ENCODE measurements at regions of chr18 and their contacts with region 1.

Region 1: DNA sequence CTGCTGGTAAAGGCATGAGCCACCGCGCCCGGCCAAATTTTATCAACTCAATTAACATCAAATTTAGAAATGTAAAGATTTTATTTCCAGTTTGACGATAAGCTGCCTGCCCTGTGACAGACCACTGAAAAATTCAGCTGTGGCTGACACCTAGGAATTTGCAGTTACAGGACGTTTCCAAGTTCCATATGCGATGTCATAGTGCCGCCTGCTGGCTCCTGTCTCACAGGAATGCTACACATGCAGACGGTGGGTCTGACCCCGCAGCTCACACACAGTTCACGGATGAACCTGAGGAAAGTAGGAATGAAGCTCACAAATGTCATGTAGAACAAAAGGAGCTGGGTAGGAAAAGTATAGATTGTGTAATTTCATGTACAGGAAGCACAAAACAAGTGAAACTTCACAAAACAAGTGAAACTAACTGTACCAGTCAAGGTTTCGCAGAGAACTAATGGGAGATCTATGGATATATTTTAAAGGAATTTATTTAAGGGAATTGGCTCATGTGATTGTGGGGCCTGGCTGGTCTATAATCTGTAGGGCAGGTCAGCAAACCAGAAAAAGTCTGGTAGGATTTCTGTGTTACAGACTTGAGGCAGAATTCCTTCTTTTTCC is 13.2 kb upstream of the SEH1L start:
- DNase-seq: peak; percentile 82
- ATAC-seq: peak; percentile 94
- H3K4me3 ChIP-seq: no peak overlapping the region; a peak in 1 of 6 replicates
- H3K27ac ChIP-seq: no peak overlapping the region
- H3K4me1 ChIP-seq: peaks cover 57% of the 10 kb centered on the region
- H3K27me3 ChIP-seq: no peaks in the 10 kb centered on the region
- CTCF ChIP-seq: peak; percentile 97
- EP300 ChIP-seq: no peak
- POLR2A ChIP-seq: no peak
- RAD21 ChIP-seq: peak; percentile 94

Region 2: DNA sequence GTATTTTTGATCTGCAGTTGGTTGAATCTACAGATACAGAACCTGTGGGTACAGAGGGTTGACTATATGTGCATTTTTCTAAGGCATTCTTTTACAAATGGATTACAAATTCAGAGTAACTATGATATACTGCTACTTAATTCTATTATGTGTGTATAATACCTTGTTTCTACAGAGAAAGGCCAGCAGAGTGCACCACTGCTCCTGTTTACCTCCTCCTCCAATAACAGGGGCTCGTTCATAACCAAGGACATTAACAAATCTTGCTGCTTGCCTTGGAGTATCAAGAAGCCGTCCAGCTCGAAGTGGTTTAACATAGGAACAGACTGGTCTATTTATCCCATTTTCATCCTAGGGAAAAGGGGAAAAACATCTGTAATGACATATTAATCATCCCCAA is 248.5 kb before region 1 on chr18:
- CTCF ChIA-PET with region 1: interaction called, 6 read pairs
- POLR2A ChIA-PET with region 1: interaction called, 3 read pairs
- in situ Hi-C with region 1: no loop called
- intact Hi-C with region 1: loop called (anchors 2 kb)
- DNase-seq: peak; percentile 24
- ATAC-seq: peak; percentile 57
- H3K4me3 ChIP-seq: no peak overlapping the region
- H3K27ac ChIP-seq: no peak overlapping the region
- H3K4me1 ChIP-seq: 0 out of 2 replicates have a peak, but pooled peaks cover 5% of the 10 kb centered on the region
- H3K27me3 ChIP-seq: no peaks in the 10 kb centered on the region
- CTCF ChIP-seq: peak; percentile 25
- EP300 ChIP-seq: no peak
- POLR2A ChIP-seq: no peak
- RAD21 ChIP-seq: no peak

Region 3: DNA sequence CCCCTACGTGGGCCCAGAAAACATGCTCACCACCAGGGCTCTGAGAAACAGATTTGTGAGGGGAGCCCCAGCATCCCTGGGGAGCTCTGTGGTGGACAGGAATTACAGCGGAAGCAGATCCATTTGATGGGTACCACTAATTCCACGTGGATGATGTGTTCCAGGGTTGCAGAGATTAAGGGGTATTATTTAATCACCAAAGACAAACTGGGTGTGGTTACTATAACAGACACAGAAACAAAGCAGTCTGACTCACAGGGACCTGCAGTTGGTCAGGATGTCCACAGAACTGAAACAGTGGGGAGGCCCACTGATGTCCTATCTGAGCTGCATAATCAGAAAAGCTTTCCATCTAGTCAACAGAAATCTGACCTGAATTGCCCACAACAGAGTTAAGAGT is 165.9 kb before region 1 on chr18:
- CTCF ChIA-PET with region 1: interaction called, 5 read pairs
- POLR2A ChIA-PET with region 1: no interaction called
- in situ Hi-C with region 1: no loop called
- intact Hi-C with region 1: loop called (anchors 1 kb)
- DNase-seq: no peak
- ATAC-seq: no peak
- H3K4me3 ChIP-seq: no peak overlapping the region; a peak in 1 of 6 replicates
- H3K27ac ChIP-seq: no peak overlapping the region
- H3K4me1 ChIP-seq: peaks cover 39% of the 10 kb centered on the region
- H3K27me3 ChIP-seq: no peaks in the 10 kb centered on the region
- CTCF ChIP-seq: no peak
- EP300 ChIP-seq: no peak
- POLR2A ChIP-seq: no peak
- RAD21 ChIP-seq: no peak

Region 4: GRCh38 chr18:12890506-12890905 is 44.1 kb before region 1 on chr18:
- CTCF ChIA-PET with region 1: interaction called, 4 read pairs
- POLR2A ChIA-PET with region 1: no interaction called
- in situ Hi-C with region 1: loop called (anchors 5 kb)
- intact Hi-C with region 1: loop called (anchors 1 kb)
- DNase-seq: peak; percentile 45
- ATAC-seq: peak; percentile 90
- H3K4me3 ChIP-seq: no peak overlapping the region
- H3K27ac ChIP-seq: no peak overlapping the region
- H3K4me1 ChIP-seq: peaks cover 16% of the 10 kb centered on the region
- H3K27me3 ChIP-seq: 0 out of 5 replicates have a peak, but pooled peaks cover 0 to 3% of the 10 kb centered on the region in 2 experiments
- CTCF ChIP-seq: peak; percentile 43
- EP300 ChIP-seq: no peak
- POLR2A ChIP-seq: no peak
- RAD21 ChIP-seq: 0 out of 2 replicates have a peak, but pooled peaks have one; percentile 27